Naive thymus-derived CD4-positive, alpha-beta T cell (primary cell): ENCODE measurements at regions of chr2 and their contacts with region 1.

Region 1: GRCh38 chr2:19000776-19001175 is 357.6 kb downstream of the OSR1 start:
- DNase-seq: no peak
- ATAC-seq: no peak
- H3K4me3 ChIP-seq: no peak overlapping the region
- H3K4me3 Mint-ChIP-seq: no peak overlapping the region
- H3K27ac ChIP-seq: no peak overlapping the region
- H3K27ac Mint-ChIP-seq: no peak overlapping the region
- H3K4me1 ChIP-seq: no peaks in the 10 kb centered on the region
- H3K4me1 Mint-ChIP-seq: no peaks in the 10 kb centered on the region
- H3K27me3 ChIP-seq: no peaks in the 10 kb centered on the region
- H3K27me3 Mint-ChIP-seq: no peaks in the 10 kb centered on the region

Region 2: DNA sequence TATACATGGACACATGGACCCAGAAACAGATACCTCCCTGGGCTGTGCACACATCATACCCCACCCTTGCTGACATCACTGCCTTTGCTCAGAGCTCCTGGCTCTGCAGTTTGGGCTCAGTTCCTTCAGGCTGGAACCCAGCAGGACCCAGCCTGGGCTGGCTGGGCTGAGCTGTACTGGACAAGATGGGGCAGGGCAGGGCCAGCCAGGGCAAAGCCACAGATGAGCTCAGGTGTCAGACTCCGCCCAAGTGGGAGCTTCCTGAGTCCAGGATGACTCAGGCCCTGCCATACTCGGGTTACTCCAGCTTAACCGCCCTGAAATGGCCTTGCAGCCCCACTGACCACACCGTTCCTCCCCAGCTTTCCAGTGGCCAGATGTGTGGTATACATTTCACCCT is 72.7 kb after region 1 on chr2:
- CTCF ChIA-PET with region 1: no interaction called
- POLR2A ChIA-PET with region 1: no interaction called
- intact Hi-C with region 1: loop called in 1 of 2 experiments (anchors 5 kb)
- DNase-seq: no peak
- ATAC-seq: no peak
- H3K4me3 ChIP-seq: no peak overlapping the region
- H3K4me3 Mint-ChIP-seq: no peak overlapping the region
- H3K27ac ChIP-seq: no peak overlapping the region
- H3K27ac Mint-ChIP-seq: no peak overlapping the region
- H3K4me1 ChIP-seq: no peaks in the 10 kb centered on the region
- H3K4me1 Mint-ChIP-seq: no peaks in the 10 kb centered on the region
- H3K27me3 ChIP-seq: no peaks in the 10 kb centered on the region
- H3K27me3 Mint-ChIP-seq: no peaks in the 10 kb centered on the region

Region 3: GRCh38 chr2:19171409-19171808 is 170.6 kb after region 1 on chr2:
- CTCF ChIA-PET with region 1: no interaction called
- POLR2A ChIA-PET with region 1: no interaction called
- intact Hi-C with region 1: no loop called
- DNase-seq: no peak
- ATAC-seq: no peak
- H3K4me3 ChIP-seq: no peak overlapping the region
- H3K4me3 Mint-ChIP-seq: no peak overlapping the region
- H3K27ac ChIP-seq: no peak overlapping the region
- H3K27ac Mint-ChIP-seq: no peak overlapping the region
- H3K4me1 ChIP-seq: no peaks in the 10 kb centered on the region
- H3K4me1 Mint-ChIP-seq: peaks cover 0 to 1% (median 0%) of the 10 kb centered on the region in 7 donors
- H3K27me3 ChIP-seq: no peaks in the 10 kb centered on the region
- H3K27me3 Mint-ChIP-seq: peaks cover 0 to 4% (median 0%) of the 10 kb centered on the region in 5 donors